Right ventricle myocardium superior (tissue), 1 donor: ENCODE measurements at regions of chr7 and their contacts with region 1.

Region 1: DNA sequence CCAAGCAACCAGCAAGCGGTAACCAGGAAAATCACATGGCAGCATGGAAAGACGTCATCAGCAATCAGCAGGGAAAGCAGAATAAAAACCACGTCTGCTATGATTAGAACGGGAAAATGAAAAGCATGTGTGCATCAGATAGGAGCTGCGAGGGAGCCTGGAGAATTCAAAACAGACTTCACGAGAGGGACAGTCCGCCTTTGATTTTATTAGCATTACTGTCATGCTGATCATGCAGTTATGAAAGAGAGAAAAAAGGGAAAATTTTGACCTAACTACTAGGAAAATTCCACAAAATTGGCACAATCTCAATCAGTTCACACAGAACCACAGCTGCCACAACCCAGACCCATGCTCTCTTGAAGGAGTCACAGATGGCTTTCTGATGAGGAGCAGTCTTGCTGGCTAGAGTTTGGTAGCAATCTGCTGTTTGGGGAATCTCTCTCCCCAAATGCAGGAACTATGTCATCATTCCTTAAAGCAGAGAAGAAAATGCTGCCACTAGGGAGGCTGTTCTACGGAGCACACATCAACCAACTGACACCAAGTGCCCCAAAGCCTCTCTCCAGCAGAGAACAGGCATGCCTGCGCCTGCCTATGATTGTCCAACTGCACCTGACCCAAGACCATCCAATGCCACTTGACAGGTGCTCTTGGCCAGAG is 295.9 kb downstream of the TNS3 start:
- DNase-seq: no peak
- ATAC-seq: peak; percentile 45

Region 2: GRCh38 chr7:47405921-47406792 is 120.2 kb after region 1 on chr7:
- intact Hi-C with region 1: loop called (anchors 10 kb)
- DNase-seq: peak; percentile 86
- ATAC-seq: peak; percentile 93